ENCODE measurements at regions of chr14 and their contacts with region 1.

Region 1: GRCh38 chr14:76337635-76338545 is 38.0 kb upstream of the ESRRB start:
- DNase-seq: no peak
- H3K4me3 ChIP-seq: no peak overlapping the region
- H3K4me3 Mint-ChIP-seq: no peak overlapping the region
- H3K27ac ChIP-seq: no peak overlapping the region
- H3K27ac Mint-ChIP-seq: no peak overlapping the region
- H3K4me1 ChIP-seq: no peaks in the 10 kb centered on the region
- H3K4me1 Mint-ChIP-seq: peaks cover 0 to 2% (median 0%) of the 10 kb centered on the region in 4 donors
- H3K27me3 ChIP-seq: no peaks in the 10 kb centered on the region
- H3K27me3 Mint-ChIP-seq: peaks cover 12 to 23% of the 10 kb centered on the region in 2 donors

Region 2: GRCh38 chr14:76227448-76228050 is 110.3 kb before region 1 on chr14:
- CTCF ChIA-PET with region 1: no interaction called
- POLR2A ChIA-PET with region 1: no interaction called
- intact Hi-C with region 1: no loop called
- DNase-seq: no peak
- H3K4me3 ChIP-seq: no peak overlapping the region
- H3K4me3 Mint-ChIP-seq: no peak overlapping the region
- H3K27ac ChIP-seq: no peak overlapping the region
- H3K27ac Mint-ChIP-seq: no peak overlapping the region
- H3K4me1 ChIP-seq: no peaks in the 10 kb centered on the region
- H3K4me1 Mint-ChIP-seq: no peaks in the 10 kb centered on the region
- H3K27me3 ChIP-seq: no peaks in the 10 kb centered on the region
- H3K27me3 Mint-ChIP-seq: no peaks in the 10 kb centered on the region

Region 3: GRCh38 chr14:76307786-76308780 is 29.8 kb before region 1 on chr14:
- CTCF ChIA-PET with region 1: no interaction called
- POLR2A ChIA-PET with region 1: no interaction called
- intact Hi-C with region 1: no loop called
- DNase-seq: no peak
- H3K4me3 ChIP-seq: no peak overlapping the region
- H3K4me3 Mint-ChIP-seq: peak overlapping the region in 1 of 8 donors; percentile 21
- H3K27ac ChIP-seq: no peak overlapping the region
- H3K27ac Mint-ChIP-seq: no peak overlapping the region
- H3K4me1 ChIP-seq: no peaks in the 10 kb centered on the region
- H3K4me1 Mint-ChIP-seq: peaks cover 3 to 9% (median 7%) of the 10 kb centered on the region in 4 donors
- H3K27me3 ChIP-seq: no peaks in the 10 kb centered on the region
- H3K27me3 Mint-ChIP-seq: peaks cover 36 to 44% of the 10 kb centered on the region in 2 donors

Region 4: GRCh38 chr14:76352639-76353281 is 14.9 kb after region 1 on chr14:
- CTCF ChIA-PET with region 1: interaction called, 14 read pairs
- POLR2A ChIA-PET with region 1: no interaction called
- intact Hi-C with region 1: no loop called
- DNase-seq: peak in 4 of 5 donors; percentile 13 to 41 (median 28)
- H3K4me3 ChIP-seq: no peak overlapping the region
- H3K4me3 Mint-ChIP-seq: peak overlapping the region in 3 of 8 donors; percentile 51 to 66 (median 57)
- H3K27ac ChIP-seq: no peak overlapping the region
- H3K27ac Mint-ChIP-seq: no peak overlapping the region
- H3K4me1 ChIP-seq: peaks cover 5% of the 10 kb centered on the region
- H3K4me1 Mint-ChIP-seq: peaks cover 0 to 14% (median 4%) of the 10 kb centered on the region in 4 donors
- H3K27me3 ChIP-seq: no peaks in the 10 kb centered on the region
- H3K27me3 Mint-ChIP-seq: peaks cover 20 to 37% of the 10 kb centered on the region in 2 donors